ENCODE measurements at regions of chr20 and their contacts with region 1.

Region 1: GRCh38 chr20:38671186-38671585 is 53.1 kb upstream of the SLC32A1 start:
- DNase-seq: no peak
- H3K4me3 ChIP-seq: no peak overlapping the region
- H3K27ac ChIP-seq: no peak overlapping the region
- H3K4me1 ChIP-seq: no peaks in the 10 kb centered on the region
- H3K27me3 ChIP-seq: peaks cover 94% of the 10 kb centered on the region
- CTCF ChIP-seq: no peak

Region 2: DNA sequence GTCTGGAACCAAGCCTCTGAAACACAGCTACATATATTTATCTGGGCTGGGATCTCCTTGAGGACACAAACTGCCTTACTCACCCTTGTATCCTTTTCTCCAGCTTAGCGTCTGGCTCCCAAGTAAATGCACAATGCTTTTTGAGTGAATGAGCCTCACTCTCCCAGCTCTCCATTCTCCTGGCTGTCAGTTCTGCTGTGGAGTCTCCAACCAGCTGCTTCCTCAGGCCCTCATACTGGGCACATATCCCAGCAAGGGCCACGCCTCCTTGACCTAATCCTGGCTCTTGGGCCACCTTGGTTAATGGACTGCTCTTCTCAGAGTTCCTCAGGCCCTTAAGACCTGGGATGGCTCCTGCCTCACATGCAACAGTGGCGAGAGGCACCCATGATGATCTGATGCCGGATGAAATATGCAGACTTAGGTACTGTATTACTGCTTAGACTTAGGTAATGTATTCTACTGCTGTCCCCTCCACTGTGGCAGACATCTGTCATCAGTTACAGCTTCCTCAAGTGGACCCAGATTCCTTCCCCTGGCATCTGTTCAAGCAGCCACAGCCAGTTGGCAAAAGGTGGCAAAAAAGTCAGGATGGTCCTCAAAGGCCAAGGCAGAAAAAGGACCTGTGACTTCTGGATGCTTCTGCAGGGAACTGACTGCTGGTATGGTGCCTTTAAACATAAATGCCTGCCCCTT is 252.5 kb before region 1 on chr20:
- CTCF ChIA-PET with region 1: no interaction called
- POLR2A ChIA-PET with region 1: interaction called, 14 read pairs
- intact Hi-C with region 1: no loop called
- DNase-seq: no peak
- H3K4me3 ChIP-seq: no peak overlapping the region
- H3K27ac ChIP-seq: no peak overlapping the region
- H3K4me1 ChIP-seq: no peaks in the 10 kb centered on the region
- H3K27me3 ChIP-seq: no peaks in the 10 kb centered on the region
- CTCF ChIP-seq: no peak

Region 3: GRCh38 chr20:38812182-38812581 is 141.0 kb after region 1 on chr20:
- CTCF ChIA-PET with region 1: no interaction called
- POLR2A ChIA-PET with region 1: no interaction called
- intact Hi-C with region 1: no loop called
- DNase-seq: no peak
- H3K4me3 ChIP-seq: no peak overlapping the region
- H3K27ac ChIP-seq: no peak overlapping the region
- H3K4me1 ChIP-seq: no peaks in the 10 kb centered on the region
- H3K27me3 ChIP-seq: peaks cover 61% of the 10 kb centered on the region
- CTCF ChIP-seq: no peak